K562 (cell line): ENCODE measurements at regions of chr11 and their contacts with region 1.

Region 1: GRCh38 chr11:72091005-72091691 is 10.5 kb downstream of the LRRC51 start:
- DNase-seq: peak; percentile 76 to 87 (median 82)
- ATAC-seq: peak; percentile 97
- H3K4me3 ChIP-seq: no peak overlapping the region
- H3K27ac ChIP-seq: peak overlapping the region; percentile 52; the same call in 1 of the 3 replicates
- H3K4me1 ChIP-seq: peaks cover 0 to 18% of the 10 kb centered on the region in 2 experiments; a peak in 3 of 5 replicates
- H3K27me3 ChIP-seq: no peaks in the 10 kb centered on the region
- CTCF ChIP-seq: peak; percentile 93 to 99 (median 98)
- EP300 ChIP-seq: no peak
- POLR2A ChIP-seq: no peak
- RAD21 ChIP-seq: peak; percentile 83 to 90

Region 2: GRCh38 chr11:71977743-71978418 is 113.3 kb before region 1 on chr11:
- CTCF ChIA-PET with region 1: interaction called, 14 read pairs
- POLR2A ChIA-PET with region 1: no interaction called
- in situ Hi-C with region 1: no loop called
- intact Hi-C with region 1: loop called (anchors 1 kb)
- DNase-seq: peak; percentile 37 to 67 (median 40)
- ATAC-seq: peak; percentile 88
- H3K4me3 ChIP-seq: no peak overlapping the region
- H3K27ac ChIP-seq: no peak overlapping the region
- H3K4me1 ChIP-seq: no peaks in the 10 kb centered on the region
- H3K27me3 ChIP-seq: no peaks in the 10 kb centered on the region
- CTCF ChIP-seq: peak; percentile 68 to 80 (median 75); a peak in 5 of 6 replicates
- EP300 ChIP-seq: no peak
- POLR2A ChIP-seq: no peak
- RAD21 ChIP-seq: peak; percentile 50 to 76; a peak in 3 of 4 replicates

Region 3: GRCh38 chr11:72030472-72031045 is 60.6 kb before region 1 on chr11:
- CTCF ChIA-PET with region 1: interaction called, 54 read pairs
- POLR2A ChIA-PET with region 1: interaction called, 3 read pairs
- in situ Hi-C with region 1: loop called (anchors 5 kb)
- intact Hi-C with region 1: loop called (anchors 1 kb)
- DNase-seq: no peak
- ATAC-seq: no peak
- H3K4me3 ChIP-seq: no peak overlapping the region
- H3K27ac ChIP-seq: no peak overlapping the region
- H3K4me1 ChIP-seq: no peaks in the 10 kb centered on the region
- H3K27me3 ChIP-seq: no peaks in the 10 kb centered on the region
- CTCF ChIP-seq: no peak
- EP300 ChIP-seq: no peak
- POLR2A ChIP-seq: no peak
- RAD21 ChIP-seq: no peak

Region 4: GRCh38 chr11:72080256-72080974 is 10.7 kb before region 1 on chr11 and contains the starts of genes LRRC51 and NUMA1:
- CTCF ChIA-PET with region 1: no interaction called
- POLR2A ChIA-PET with region 1: interaction called, 15 read pairs
- in situ Hi-C with region 1: no loop called
- intact Hi-C with region 1: no loop called
- DNase-seq: peak; percentile 94 to 100 (median 94)
- ATAC-seq: peak; percentile 95
- H3K4me3 ChIP-seq: peak within 1 kb of the TSS; percentile 70
- H3K27ac ChIP-seq: peak within 1 kb of the TSS; percentile 86
- H3K4me1 ChIP-seq: peaks cover 6 to 15% of the 10 kb centered on the region in 2 experiments; a peak in 3 of 5 replicates
- H3K27me3 ChIP-seq: no peaks in the 10 kb centered on the region
- CTCF ChIP-seq: no peak
- EP300 ChIP-seq: no peak
- POLR2A ChIP-seq: peak; percentile 90
- RAD21 ChIP-seq: 0 out of 4 replicates have a peak, but pooled peaks of 1 of the 2 experiments have one; percentile 7
- polyA plus RNA-seq, gene LRRC51: 6.9 to 8.6 TPM
- polyA plus RNA-seq, gene NUMA1: 4.1 to 7.6 TPM

Region 5: DNA sequence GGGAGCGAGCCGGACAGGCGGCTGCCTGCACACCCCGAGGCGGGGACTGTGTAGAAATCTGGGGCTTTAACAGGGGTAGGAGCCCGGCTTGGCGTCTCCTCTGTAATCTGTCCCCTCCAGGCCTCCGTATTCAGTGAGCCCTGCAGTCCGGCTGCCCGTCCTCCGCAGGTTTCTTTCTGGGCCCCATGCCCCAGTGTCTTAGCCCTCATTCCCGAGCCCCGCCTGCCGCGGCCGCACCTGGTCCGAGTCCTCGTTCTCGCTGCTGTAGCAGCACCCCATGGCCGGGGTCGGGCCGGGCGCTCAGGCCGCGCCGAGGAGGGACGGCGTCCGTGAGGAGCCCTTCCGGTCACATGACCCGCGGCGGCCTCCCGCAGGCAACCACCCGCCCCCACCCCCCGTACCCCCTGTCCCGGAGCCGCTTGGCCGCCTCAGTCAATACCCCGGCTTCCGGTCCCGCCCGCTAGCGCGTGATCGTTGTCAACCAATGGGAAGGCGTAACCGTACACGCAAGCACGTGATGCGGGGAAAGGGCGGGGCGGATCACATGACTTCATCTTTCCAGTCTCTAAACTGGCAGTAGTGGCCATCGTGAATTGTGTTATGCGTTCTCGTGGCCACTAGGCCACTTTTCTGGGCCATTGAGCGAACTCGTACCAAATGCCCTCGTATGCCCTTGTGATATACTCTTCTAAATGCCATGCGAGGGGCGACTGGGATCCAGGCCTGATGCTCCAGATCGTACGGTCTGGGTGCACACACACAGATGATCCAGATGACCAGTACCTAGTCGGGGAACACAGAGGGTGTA is 12.0 kb after region 1 on chr11 and contains the start of gene LAMTOR1:
- CTCF ChIA-PET with region 1: no interaction called
- POLR2A ChIA-PET with region 1: interaction called, 21 read pairs
- in situ Hi-C with region 1: no loop called
- intact Hi-C with region 1: no loop called
- DNase-seq: peak; percentile 96 to 100 (median 96)
- ATAC-seq: peak; percentile 96
- H3K4me3 ChIP-seq: peak within 1 kb of the TSS; percentile 77
- H3K27ac ChIP-seq: peak within 1 kb of the TSS; percentile 96
- H3K4me1 ChIP-seq: peaks cover 12 to 39% of the 10 kb centered on the region in 2 experiments
- H3K27me3 ChIP-seq: no peaks in the 10 kb centered on the region
- CTCF ChIP-seq: peak; percentile 49 to 71 (median 66)
- EP300 ChIP-seq: no peak; the same call in none of the 2 replicates
- POLR2A ChIP-seq: peak; percentile 91
- RAD21 ChIP-seq: peak in 1 of 2 experiments; percentile 32; a peak in 3 of 4 replicates
- polyA plus RNA-seq, gene LAMTOR1: 91.1 to 97.5 TPM

Region 6: DNA sequence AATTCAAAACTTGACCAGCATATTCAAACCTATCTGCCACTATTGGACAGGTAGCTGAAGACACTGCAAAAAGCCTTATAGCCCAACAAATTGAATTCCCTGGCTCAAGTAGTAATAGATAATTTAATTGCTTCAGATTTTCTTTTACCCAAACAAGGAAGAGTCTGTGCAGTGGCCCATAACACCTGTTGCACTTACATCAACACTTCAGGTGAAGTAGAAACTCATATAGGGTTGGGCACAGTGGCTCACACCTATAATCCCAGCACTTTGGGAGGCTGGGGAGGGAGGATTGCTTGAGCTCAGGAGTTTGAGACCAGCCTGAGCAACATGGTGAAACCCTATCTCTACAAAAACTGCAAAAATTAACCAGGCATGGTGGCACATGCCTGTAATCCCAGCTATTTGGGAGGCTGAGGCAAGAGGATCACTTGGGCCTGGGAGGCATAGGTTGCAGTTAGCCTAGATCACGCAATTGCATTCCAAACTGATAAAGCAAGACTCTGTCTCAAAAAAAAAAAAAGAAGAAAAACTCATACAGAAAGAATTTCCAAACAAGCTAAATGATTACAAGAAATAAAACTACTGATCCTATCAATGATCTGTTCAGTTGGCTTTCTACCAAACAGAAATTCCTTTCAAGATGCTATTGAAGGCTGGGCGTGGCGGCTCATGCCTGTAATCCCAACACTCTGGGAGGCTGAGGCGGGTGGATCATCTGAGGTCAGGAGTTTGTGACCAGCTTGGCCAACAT is 53.8 kb after region 1 on chr11:
- CTCF ChIA-PET with region 1: interaction called, 9 read pairs
- POLR2A ChIA-PET with region 1: interaction called, 4 read pairs
- in situ Hi-C with region 1: no loop called
- intact Hi-C with region 1: loop called (anchors 2 kb)
- DNase-seq: no peak
- ATAC-seq: no peak
- H3K4me3 ChIP-seq: no peak overlapping the region
- H3K27ac ChIP-seq: no peak overlapping the region
- H3K4me1 ChIP-seq: peaks cover 0 to 3% of the 10 kb centered on the region in 2 experiments; a peak in 1 of 5 replicates
- H3K27me3 ChIP-seq: no peaks in the 10 kb centered on the region
- CTCF ChIP-seq: no peak
- EP300 ChIP-seq: no peak
- POLR2A ChIP-seq: no peak
- RAD21 ChIP-seq: no peak

Region 7: DNA sequence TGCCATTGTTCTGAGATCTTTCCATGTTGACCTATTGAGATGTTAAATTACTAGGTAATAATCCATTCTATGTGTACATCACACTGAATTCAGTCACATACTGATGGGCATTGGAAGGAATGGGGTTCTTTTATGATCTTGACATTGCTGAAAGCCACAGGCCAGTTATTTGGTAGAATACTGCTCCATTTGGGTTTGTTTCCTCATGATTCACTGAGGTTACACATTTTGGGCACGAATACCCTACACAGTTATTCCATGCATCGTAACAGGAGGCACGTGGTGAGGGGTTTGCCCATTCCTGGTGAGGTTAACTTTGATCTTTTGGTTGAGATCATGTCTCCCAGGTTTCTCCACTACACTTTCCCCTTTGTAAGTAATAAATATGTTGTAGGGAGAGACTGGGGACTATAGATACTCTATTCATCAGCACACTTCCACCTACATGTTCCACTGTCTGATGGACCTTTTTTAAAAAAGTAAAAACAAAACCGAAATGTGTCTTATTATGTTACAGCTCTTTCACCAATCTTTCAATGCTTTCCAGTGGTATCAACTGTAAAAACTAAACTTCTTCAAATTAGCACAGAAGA is 88.8 kb after region 1 on chr11:
- CTCF ChIA-PET with region 1: interaction called, 6 read pairs
- POLR2A ChIA-PET with region 1: no interaction called
- in situ Hi-C with region 1: no loop called
- intact Hi-C with region 1: loop called (anchors 2 kb)
- DNase-seq: no peak
- ATAC-seq: no peak
- H3K4me3 ChIP-seq: no peak overlapping the region
- H3K27ac ChIP-seq: no peak overlapping the region
- H3K4me1 ChIP-seq: peaks cover 0 to 3% of the 10 kb centered on the region in 2 experiments; a peak in 1 of 5 replicates
- H3K27me3 ChIP-seq: peaks cover 4 to 7% of the 10 kb centered on the region in 2 experiments; a peak in 2 of 5 replicates
- CTCF ChIP-seq: no peak
- EP300 ChIP-seq: no peak
- POLR2A ChIP-seq: no peak
- RAD21 ChIP-seq: no peak